Activated CD4-positive, alpha-beta memory T cell treated with anti-CD3 and anti-CD28 coated beads, Interleukin-2, amount 10 ng/mL, durations not matched to agents 7 days and 5 days (primary cell): ENCODE measurements at regions of chr13 and their contacts with region 1.

Region 1: GRCh38 chr13:60396783-60397703 is at the start of gene TDRD3:
- DNase-seq: peak; percentile 85
- H3K4me3 Mint-ChIP-seq: peak within 1 kb of the TSS; percentile 93
- H3K27ac Mint-ChIP-seq: peak within 1 kb of the TSS; percentile 96
- H3K4me1 Mint-ChIP-seq: peaks cover 35% of the 10 kb centered on the region
- H3K27me3 Mint-ChIP-seq: no peaks in the 10 kb centered on the region
- total RNA-seq, gene TDRD3: 20.3 to 22.1 TPM

Region 2: GRCh38 chr13:60163478-60164233 is 233.4 kb before region 1 on chr13 and contains the start of gene DIAPH3:
- CTCF ChIA-PET with region 1: interaction called, 4 read pairs
- POLR2A ChIA-PET with region 1: interaction called, 21 read pairs
- DNase-seq: peak; percentile 95
- H3K4me3 Mint-ChIP-seq: peak within 1 kb of the TSS; percentile 88
- H3K27ac Mint-ChIP-seq: peak within 1 kb of the TSS; percentile 76
- H3K4me1 Mint-ChIP-seq: peaks cover 42% of the 10 kb centered on the region
- H3K27me3 Mint-ChIP-seq: no peaks in the 10 kb centered on the region
- total RNA-seq, gene DIAPH3: 21.7 to 23.2 TPM

Region 3: GRCh38 chr13:60201286-60201685 is 195.8 kb before region 1 on chr13:
- CTCF ChIA-PET with region 1: no interaction called
- POLR2A ChIA-PET with region 1: no interaction called
- DNase-seq: no peak
- H3K4me3 Mint-ChIP-seq: no peak overlapping the region
- H3K27ac Mint-ChIP-seq: no peak overlapping the region
- H3K4me1 Mint-ChIP-seq: no peaks in the 10 kb centered on the region
- H3K27me3 Mint-ChIP-seq: peaks cover 9% of the 10 kb centered on the region

Region 4: GRCh38 chr13:60214213-60215055 is 182.6 kb before region 1 on chr13:
- CTCF ChIA-PET with region 1: no interaction called
- POLR2A ChIA-PET with region 1: no interaction called
- DNase-seq: no peak
- H3K4me3 Mint-ChIP-seq: no peak overlapping the region
- H3K27ac Mint-ChIP-seq: no peak overlapping the region
- H3K4me1 Mint-ChIP-seq: no peaks in the 10 kb centered on the region
- H3K27me3 Mint-ChIP-seq: peaks cover 30% of the 10 kb centered on the region

Region 5: DNA sequence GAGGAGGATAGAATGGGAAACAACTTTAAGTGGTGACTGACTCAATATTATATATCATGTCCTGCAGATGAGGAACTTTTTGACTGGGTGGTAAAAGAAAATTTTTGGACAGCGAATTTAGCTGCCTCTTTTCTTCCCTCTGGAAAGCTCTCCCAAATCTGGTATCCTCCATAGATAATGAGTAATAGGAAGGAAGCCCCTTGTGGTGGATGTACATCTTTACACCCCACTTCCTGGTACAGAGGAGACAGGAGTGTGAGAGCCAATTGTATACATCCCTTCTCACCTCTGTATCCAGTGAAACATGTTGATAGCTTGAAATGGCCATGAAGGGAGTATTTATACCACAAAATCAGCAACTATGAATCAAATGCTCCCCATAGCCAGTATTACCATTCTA is 17.2 kb before region 1 on chr13:
- CTCF ChIA-PET with region 1: no interaction called
- POLR2A ChIA-PET with region 1: no interaction called
- DNase-seq: no peak
- H3K4me3 Mint-ChIP-seq: no peak overlapping the region
- H3K27ac Mint-ChIP-seq: no peak overlapping the region
- H3K4me1 Mint-ChIP-seq: no peaks in the 10 kb centered on the region
- H3K27me3 Mint-ChIP-seq: peaks cover 10% of the 10 kb centered on the region

Region 6: DNA sequence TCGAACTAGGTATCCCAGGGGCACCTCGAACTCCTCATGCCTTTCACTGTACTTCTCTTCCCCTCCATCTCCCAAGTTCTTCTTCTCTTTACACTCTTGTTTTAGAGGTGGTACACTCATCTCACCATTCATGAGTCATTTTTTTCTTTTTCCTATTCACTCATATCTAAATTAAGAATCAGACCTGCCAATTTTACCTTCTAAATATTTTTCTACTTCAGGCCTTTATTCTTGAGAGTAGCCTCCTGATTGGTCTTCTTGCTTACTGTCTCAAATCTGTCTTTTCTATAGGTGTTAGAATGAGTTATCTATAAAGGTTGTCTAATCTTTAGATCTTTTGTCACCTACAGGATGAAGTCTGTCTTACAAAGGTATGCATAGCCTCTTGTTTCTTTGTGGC is 20.7 kb after region 1 on chr13:
- CTCF ChIA-PET with region 1: no interaction called
- POLR2A ChIA-PET with region 1: no interaction called
- DNase-seq: no peak
- H3K4me3 Mint-ChIP-seq: no peak overlapping the region
- H3K27ac Mint-ChIP-seq: no peak overlapping the region
- H3K4me1 Mint-ChIP-seq: peaks cover 8% of the 10 kb centered on the region
- H3K27me3 Mint-ChIP-seq: no peaks in the 10 kb centered on the region

Region 7: GRCh38 chr13:60431108-60431700 is 34.2 kb after region 1 on chr13:
- CTCF ChIA-PET with region 1: interaction called, 16 read pairs
- POLR2A ChIA-PET with region 1: interaction called, 32 read pairs
- DNase-seq: no peak
- H3K4me3 Mint-ChIP-seq: no peak overlapping the region
- H3K27ac Mint-ChIP-seq: no peak overlapping the region
- H3K4me1 Mint-ChIP-seq: peaks cover 32% of the 10 kb centered on the region
- H3K27me3 Mint-ChIP-seq: no peaks in the 10 kb centered on the region